Naive thymus-derived CD4-positive, alpha-beta T cell (primary cell): ENCODE measurements at regions of chr3 and their contacts with region 1.

Region 1: GRCh38 chr3:112357930-112358780 is 25.2 kb downstream of the CD200 start:
- DNase-seq: peak in 8 of 9 donors; percentile 22 to 77 (median 44)
- ATAC-seq: peak; percentile 92
- H3K4me3 ChIP-seq: peak overlapping the region; percentile 37
- H3K4me3 Mint-ChIP-seq: peak overlapping the region; percentile 60 to 93 (median 82)
- H3K27ac ChIP-seq: peak overlapping the region; percentile 56
- H3K27ac Mint-ChIP-seq: peak overlapping the region; percentile 52 to 95 (median 89)
- H3K4me1 ChIP-seq: peaks cover 0 to 18% of the 10 kb centered on the region in 2 donors
- H3K4me1 Mint-ChIP-seq: peaks cover 5 to 33% (median 20%) of the 10 kb centered on the region in 7 donors
- H3K27me3 ChIP-seq: no peaks in the 10 kb centered on the region
- H3K27me3 Mint-ChIP-seq: no peaks in the 10 kb centered on the region

Region 2: GRCh38 chr3:112333002-112333380 is 25.2 kb before region 1 on chr3 and contains the start of gene CD200:
- CTCF ChIA-PET with region 1: interaction called, 3 read pairs
- POLR2A ChIA-PET with region 1: interaction called, 3 read pairs
- intact Hi-C with region 1: loop called (anchors 1 to 2 kb)
- DNase-seq: peak; percentile 25 to 69 (median 42)
- ATAC-seq: peak; percentile 79
- H3K4me3 ChIP-seq: peak within 1 kb of the TSS; percentile 78
- H3K4me3 Mint-ChIP-seq: peak within 1 kb of the TSS; percentile 82 to 95 (median 92)
- H3K27ac ChIP-seq: peak within 1 kb of the TSS; percentile 62
- H3K27ac Mint-ChIP-seq: peak within 1 kb of the TSS; percentile 71 to 90 (median 78)
- H3K4me1 ChIP-seq: peaks cover 0 to 6% of the 10 kb centered on the region in 2 donors
- H3K4me1 Mint-ChIP-seq: peaks cover 14 to 56% (median 47%) of the 10 kb centered on the region in 7 donors
- H3K27me3 ChIP-seq: no peaks in the 10 kb centered on the region
- H3K27me3 Mint-ChIP-seq: no peaks in the 10 kb centered on the region
- total RNA-seq, gene CD200: 2.5 to 9.1 (median 2.9) TPM

Region 3: DNA sequence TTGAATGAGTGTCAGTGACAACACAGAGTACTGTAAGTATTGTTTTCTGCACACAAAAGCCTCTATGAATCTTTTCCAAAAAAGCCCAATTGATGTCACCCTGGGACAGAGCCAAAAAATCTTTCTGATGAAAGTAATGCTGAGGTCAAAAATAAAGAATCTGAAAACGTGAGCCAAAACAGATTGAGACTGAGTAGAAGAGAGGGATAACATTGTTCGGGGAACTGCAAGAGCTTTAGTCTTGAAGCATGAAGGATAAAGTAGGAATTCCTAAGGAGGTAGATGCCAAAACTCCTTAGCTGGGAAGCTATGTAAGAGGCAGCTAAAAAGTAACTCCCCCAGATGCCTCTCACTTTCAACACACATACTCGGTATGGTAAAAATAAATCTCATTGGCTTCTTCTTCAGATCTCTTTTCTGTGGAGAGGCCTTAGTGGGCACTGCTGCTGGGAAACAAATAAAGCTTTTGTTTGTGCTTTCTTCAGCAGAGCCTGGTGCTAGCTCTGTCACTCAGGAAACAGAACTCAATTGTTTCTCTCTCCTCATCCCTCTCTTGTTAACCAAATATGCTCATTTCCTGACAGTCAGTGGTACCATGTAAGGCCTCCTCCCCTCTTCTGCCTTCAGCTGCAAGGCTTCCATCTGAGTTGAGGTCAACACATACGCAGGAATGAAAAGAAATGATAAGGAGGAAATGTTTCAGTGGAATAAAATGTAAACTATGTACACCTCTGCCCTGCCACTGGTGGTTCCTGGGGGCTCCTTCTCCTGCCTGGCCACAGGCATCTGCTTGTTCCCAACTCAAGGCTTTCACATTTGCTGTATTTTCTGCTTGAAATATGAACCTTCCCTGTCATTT is 32.9 kb after region 1 on chr3:
- CTCF ChIA-PET with region 1: no interaction called
- POLR2A ChIA-PET with region 1: no interaction called
- intact Hi-C with region 1: loop called in 1 of 2 experiments (anchors 2 kb)
- DNase-seq: peak in 5 of 9 donors; percentile 7 to 34 (median 25)
- ATAC-seq: peak; percentile 60
- H3K4me3 ChIP-seq: no peak overlapping the region
- H3K4me3 Mint-ChIP-seq: peak overlapping the region in 6 of 10 donors; percentile 9 to 59 (median 34)
- H3K27ac ChIP-seq: no peak overlapping the region
- H3K27ac Mint-ChIP-seq: peak overlapping the region; percentile 60 to 91 (median 77)
- H3K4me1 ChIP-seq: peaks cover 0 to 9% of the 10 kb centered on the region in 2 donors
- H3K4me1 Mint-ChIP-seq: peaks cover 27 to 50% (median 42%) of the 10 kb centered on the region in 7 donors
- H3K27me3 ChIP-seq: no peaks in the 10 kb centered on the region
- H3K27me3 Mint-ChIP-seq: no peaks in the 10 kb centered on the region

Region 4: GRCh38 chr3:114319453-114319852 is 1961.3 kb after region 1 on chr3:
- CTCF ChIA-PET with region 1: no interaction called
- POLR2A ChIA-PET with region 1: no interaction called
- intact Hi-C with region 1: no loop called
- DNase-seq: no peak
- ATAC-seq: no peak
- H3K4me3 ChIP-seq: no peak overlapping the region
- H3K4me3 Mint-ChIP-seq: no peak overlapping the region
- H3K27ac ChIP-seq: no peak overlapping the region
- H3K27ac Mint-ChIP-seq: no peak overlapping the region
- H3K4me1 ChIP-seq: peaks cover 0 to 54% of the 10 kb centered on the region in 2 donors
- H3K4me1 Mint-ChIP-seq: peaks cover 0 to 37% (median 4%) of the 10 kb centered on the region in 7 donors
- H3K27me3 ChIP-seq: no peaks in the 10 kb centered on the region
- H3K27me3 Mint-ChIP-seq: no peaks in the 10 kb centered on the region